Activated naive CD4-positive, alpha-beta T cell treated with anti-CD3 and anti-CD28 coated beads, Interleukin-2, amount 10 ng/mL, durations not matched to agents 7 days and 5 days (primary cell): ENCODE measurements at regions of chr9 and their contacts with region 1.

Region 1: GRCh38 chr9:105842023-105842644 is 147.8 kb downstream of the TMEM38B start:
- DNase-seq: peak; percentile 55
- H3K4me3 Mint-ChIP-seq: no peak overlapping the region
- H3K27ac Mint-ChIP-seq: no peak overlapping the region
- H3K4me1 Mint-ChIP-seq: no peaks in the 10 kb centered on the region
- H3K27me3 Mint-ChIP-seq: no peaks in the 10 kb centered on the region

Region 2: DNA sequence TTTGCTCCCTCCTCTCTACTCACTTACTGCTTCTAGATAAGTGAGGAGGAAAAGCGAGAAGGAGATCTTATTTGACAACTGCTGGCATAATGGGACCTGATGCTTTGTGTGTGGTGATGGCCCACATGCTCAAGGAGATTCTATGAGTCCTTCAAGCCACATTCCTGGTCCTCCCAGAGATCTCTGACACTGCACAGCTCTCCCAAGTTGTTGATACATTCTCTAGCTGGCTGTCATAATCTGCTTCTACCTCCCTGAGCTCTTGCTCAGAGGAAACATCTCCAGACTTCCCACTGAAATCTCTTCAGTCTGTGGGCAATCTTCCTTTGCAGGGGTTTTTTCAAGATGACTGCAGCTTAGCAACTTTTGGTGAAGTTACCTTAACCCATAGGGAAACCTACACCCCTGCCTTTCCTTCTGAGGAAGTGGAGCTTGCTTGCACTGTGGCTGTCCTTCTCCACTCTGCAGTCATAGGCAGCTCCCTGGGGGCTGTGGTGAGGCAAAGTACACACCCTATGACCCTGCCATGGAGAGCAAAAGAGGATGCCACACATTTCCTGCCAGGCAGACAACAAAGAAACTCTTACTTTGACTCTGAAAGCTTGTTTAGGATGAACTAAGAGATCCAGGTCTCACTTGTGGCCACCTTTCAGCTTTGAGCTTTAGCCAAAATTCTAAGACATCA is 16.0 kb after region 1 on chr9:
- CTCF ChIA-PET with region 1: interaction called, 20 read pairs
- DNase-seq: peak; percentile 64
- H3K4me3 Mint-ChIP-seq: no peak overlapping the region
- H3K27ac Mint-ChIP-seq: peak overlapping the region; percentile 88
- H3K4me1 Mint-ChIP-seq: peaks cover 30% of the 10 kb centered on the region
- H3K27me3 Mint-ChIP-seq: peaks cover 24% of the 10 kb centered on the region

Region 3: GRCh38 chr9:105881654-105882349 is 39.7 kb after region 1 on chr9:
- CTCF ChIA-PET with region 1: interaction called, 155 read pairs
- DNase-seq: peak; percentile 83
- H3K4me3 Mint-ChIP-seq: no peak overlapping the region
- H3K27ac Mint-ChIP-seq: no peak overlapping the region
- H3K4me1 Mint-ChIP-seq: peaks cover 30% of the 10 kb centered on the region
- H3K27me3 Mint-ChIP-seq: peaks cover 33% of the 10 kb centered on the region